H1 (cell line): ENCODE measurements at regions of chr18 and their contacts with region 1.

Region 1: GRCh38 chr18:11987527-11987926 is 6.2 kb downstream of the IMPA2 start:
- DNase-seq: no peak
- H3K4me3 ChIP-seq: no peak overlapping the region
- H3K27ac ChIP-seq: no peak overlapping the region
- H3K4me1 ChIP-seq: peaks cover 12 to 36% (median 22%) of the 10 kb centered on the region in 4 experiments
- H3K27me3 ChIP-seq: no peaks in the 10 kb centered on the region
- CTCF ChIP-seq: no peak
- EP300 ChIP-seq: no peak
- POLR2A ChIP-seq: no peak
- RAD21 ChIP-seq: no peak

Region 2: GRCh38 chr18:11752116-11752911 is 235.2 kb before region 1 on chr18:
- CTCF ChIA-PET with region 1: no interaction called
- POLR2A ChIA-PET with region 1: no interaction called
- DNase-seq: peak in 1 of 2 experiments; percentile 68
- H3K4me3 ChIP-seq: peak overlapping the region; percentile 60 to 70 (median 66)
- H3K27ac ChIP-seq: no peak overlapping the region
- H3K4me1 ChIP-seq: peaks cover 0 to 11% (median 3%) of the 10 kb centered on the region in 4 experiments; a peak in 5 of 7 replicates
- H3K27me3 ChIP-seq: peaks cover 2 to 35% (median 25%) of the 10 kb centered on the region in 4 experiments
- CTCF ChIP-seq: no peak
- EP300 ChIP-seq: no peak
- POLR2A ChIP-seq: no peak
- RAD21 ChIP-seq: no peak

Region 3: GRCh38 chr18:11789731-11790510 is 197.6 kb before region 1 on chr18:
- CTCF ChIA-PET with region 1: no interaction called
- POLR2A ChIA-PET with region 1: no interaction called
- DNase-seq: no peak
- H3K4me3 ChIP-seq: no peak overlapping the region
- H3K27ac ChIP-seq: no peak overlapping the region
- H3K4me1 ChIP-seq: peaks cover 8 to 29% (median 15%) of the 10 kb centered on the region in 4 experiments
- H3K27me3 ChIP-seq: no peaks in the 10 kb centered on the region
- CTCF ChIP-seq: no peak
- EP300 ChIP-seq: no peak
- POLR2A ChIP-seq: no peak
- RAD21 ChIP-seq: no peak

Region 4: DNA sequence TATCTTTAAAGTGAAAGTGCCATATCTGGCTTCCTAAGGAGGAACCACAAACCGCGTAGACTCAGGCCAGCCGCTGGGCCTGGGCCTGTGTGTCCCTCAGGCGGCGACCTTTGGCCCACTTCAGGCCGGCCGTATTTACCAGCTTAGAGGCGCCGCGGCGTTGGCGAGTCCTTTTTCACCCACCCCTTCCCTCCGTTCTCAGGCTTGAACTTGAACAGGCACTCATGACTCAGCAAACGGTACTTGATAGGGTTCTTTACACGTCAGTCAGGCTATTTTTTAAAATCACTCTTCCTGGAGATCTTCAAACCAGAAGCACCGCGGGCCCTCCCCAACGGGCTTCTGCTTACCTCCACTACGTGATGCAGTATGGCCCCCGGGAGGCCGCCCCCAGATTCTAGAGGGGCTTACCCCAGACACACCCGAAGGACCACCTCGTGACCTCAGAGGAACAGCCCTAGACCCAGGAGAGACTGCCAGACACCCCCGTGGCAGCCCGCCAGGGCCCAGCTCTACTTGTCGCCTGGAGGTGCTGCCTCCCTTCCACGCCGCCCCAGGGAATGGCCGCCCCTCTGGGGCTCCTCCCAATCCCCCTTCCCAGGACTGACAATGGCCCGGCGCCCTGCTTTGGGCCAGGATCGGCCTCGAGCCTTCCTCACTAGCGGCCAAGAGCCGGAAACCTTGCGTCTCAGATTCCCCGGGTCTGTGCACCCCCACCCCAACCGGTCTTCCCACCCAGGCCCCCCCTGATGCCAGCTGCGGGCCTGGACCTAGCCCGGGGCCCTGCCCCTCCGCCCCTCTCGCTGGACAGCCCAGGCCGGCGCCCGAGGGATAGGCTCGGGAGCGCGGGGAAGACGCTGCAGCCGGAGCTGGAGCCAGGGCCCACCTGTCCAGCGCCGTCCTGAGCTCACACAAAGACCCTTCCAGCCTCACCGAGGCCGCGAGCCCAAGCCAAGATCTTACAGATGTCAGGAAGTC is 40.0 kb before region 1 on chr18:
- CTCF ChIA-PET with region 1: interaction called, 471 read pairs
- POLR2A ChIA-PET with region 1: interaction called, 15 read pairs
- DNase-seq: peak; percentile 73 to 83
- H3K4me3 ChIP-seq: peak overlapping the region; percentile 39 to 69 (median 52)
- H3K27ac ChIP-seq: peak overlapping the region; percentile 62; the same call in 1 of the 2 replicates
- H3K4me1 ChIP-seq: peaks cover 3 to 11% (median 7%) of the 10 kb centered on the region in 4 experiments
- H3K27me3 ChIP-seq: no peaks in the 10 kb centered on the region
- CTCF ChIP-seq: no peak
- EP300 ChIP-seq: no peak
- POLR2A ChIP-seq: peak in 1 of 2 experiments; percentile 61; a peak in 2 of 3 replicates
- RAD21 ChIP-seq: no peak; a peak in 1 of 4 replicates

Region 5: GRCh38 chr18:12038639-12039417 is 51.3 kb after region 1 on chr18:
- CTCF ChIA-PET with region 1: interaction called, 12 read pairs
- POLR2A ChIA-PET with region 1: interaction called, 3 read pairs
- DNase-seq: peak; percentile 50 to 94
- H3K4me3 ChIP-seq: peak overlapping the region; percentile 33 to 72 (median 65)
- H3K27ac ChIP-seq: no peak overlapping the region
- H3K4me1 ChIP-seq: no peaks in the 10 kb centered on the region
- H3K27me3 ChIP-seq: peaks cover 0 to 13% (median 10%) of the 10 kb centered on the region in 4 experiments; a peak in 6 of 7 replicates
- CTCF ChIP-seq: peak; percentile 95 to 98 (median 95)
- EP300 ChIP-seq: no peak
- POLR2A ChIP-seq: no peak
- RAD21 ChIP-seq: peak; percentile 93 to 96